GM12878 (cell line): ENCODE measurements at regions of chr4 and their contacts with region 1.

Region 1: GRCh38 chr4:127880764-127881562 is at the start of gene PLK4:
- DNase-seq: peak; percentile 90
- ATAC-seq: peak; percentile 93
- H3K4me3 ChIP-seq: peak within 1 kb of the TSS; percentile 94
- H3K27ac ChIP-seq: peak within 1 kb of the TSS; percentile 93
- H3K4me1 ChIP-seq: no peaks in the 10 kb centered on the region; the same call in 1 of the 2 replicates
- H3K27me3 ChIP-seq: no peaks in the 10 kb centered on the region
- CTCF ChIP-seq: no peak
- EP300 ChIP-seq: 0 out of 4 replicates have a peak, but pooled peaks of 1 of the 2 experiments have one; percentile 44
- POLR2A ChIP-seq: peak; percentile 86
- RAD21 ChIP-seq: no peak
- polyA plus RNA-seq, gene PLK4: 16.6 to 17.5 TPM

Region 2: GRCh38 chr4:127521463-127521862 is 359.5 kb before region 1 on chr4:
- CTCF ChIA-PET with region 1: no interaction called
- POLR2A ChIA-PET with region 1: no interaction called
- RAD21 ChIA-PET with region 1: no interaction called
- SMC1A ChIA-PET with region 1: no interaction called
- in situ Hi-C with region 1: no loop called
- intact Hi-C with region 1: no loop called
- DNase-seq: no peak
- ATAC-seq: no peak
- H3K4me3 ChIP-seq: no peak overlapping the region
- H3K27ac ChIP-seq: no peak overlapping the region
- H3K4me1 ChIP-seq: no peaks in the 10 kb centered on the region
- H3K27me3 ChIP-seq: no peaks in the 10 kb centered on the region
- CTCF ChIP-seq: no peak
- EP300 ChIP-seq: no peak
- POLR2A ChIP-seq: no peak
- RAD21 ChIP-seq: no peak

Region 3: GRCh38 chr4:127604949-127605709 is 275.8 kb before region 1 on chr4:
- CTCF ChIA-PET with region 1: no interaction called
- POLR2A ChIA-PET with region 1: no interaction called
- RAD21 ChIA-PET with region 1: no interaction called
- SMC1A ChIA-PET with region 1: no interaction called
- in situ Hi-C with region 1: no loop called
- intact Hi-C with region 1: loop called (anchors 10 kb)
- DNase-seq: no peak
- ATAC-seq: 0 out of 3 replicates have a peak, but pooled peaks have one; percentile 21
- H3K4me3 ChIP-seq: no peak overlapping the region
- H3K27ac ChIP-seq: no peak overlapping the region
- H3K4me1 ChIP-seq: no peaks in the 10 kb centered on the region
- H3K27me3 ChIP-seq: no peaks in the 10 kb centered on the region; a peak in 2 of 4 replicates
- CTCF ChIP-seq: peak; percentile 9 to 51 (median 25); a peak in 3 of 6 replicates
- EP300 ChIP-seq: no peak
- POLR2A ChIP-seq: no peak
- RAD21 ChIP-seq: peak; percentile 56

Region 4: GRCh38 chr4:127741247-127741646 is 139.7 kb before region 1 on chr4:
- CTCF ChIA-PET with region 1: no interaction called
- POLR2A ChIA-PET with region 1: no interaction called
- RAD21 ChIA-PET with region 1: no interaction called
- SMC1A ChIA-PET with region 1: no interaction called
- in situ Hi-C with region 1: no loop called
- intact Hi-C with region 1: no loop called
- DNase-seq: no peak
- ATAC-seq: no peak
- H3K4me3 ChIP-seq: no peak overlapping the region
- H3K27ac ChIP-seq: no peak overlapping the region
- H3K4me1 ChIP-seq: no peaks in the 10 kb centered on the region
- H3K27me3 ChIP-seq: no peaks in the 10 kb centered on the region
- CTCF ChIP-seq: no peak
- EP300 ChIP-seq: no peak
- POLR2A ChIP-seq: no peak
- RAD21 ChIP-seq: no peak

Region 5: DNA sequence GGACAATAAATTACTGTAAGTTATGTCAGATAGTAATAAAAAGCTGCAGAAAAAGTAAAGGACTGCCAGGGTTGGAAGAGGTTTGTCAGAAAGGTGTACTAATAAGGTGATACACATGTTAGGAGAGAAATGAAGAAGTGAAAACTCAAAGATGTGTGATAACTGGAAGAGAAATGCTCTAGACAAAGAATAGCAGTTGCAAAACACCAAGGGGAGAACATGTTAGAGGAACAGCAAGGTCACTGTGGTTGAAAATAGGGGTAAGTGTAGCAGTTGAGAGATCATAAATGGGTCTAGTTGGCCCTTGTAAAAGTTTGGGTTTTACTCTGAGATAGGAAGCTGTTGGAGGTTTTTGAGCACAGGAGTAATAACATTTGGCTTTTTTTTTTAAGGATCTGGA is 51.9 kb before region 1 on chr4:
- CTCF ChIA-PET with region 1: no interaction called
- POLR2A ChIA-PET with region 1: interaction called, 3 read pairs
- RAD21 ChIA-PET with region 1: interaction called, 4 read pairs
- SMC1A ChIA-PET with region 1: interaction called, 4 read pairs
- in situ Hi-C with region 1: no loop called
- intact Hi-C with region 1: loop called (anchors 5 kb)
- DNase-seq: peak; percentile 65
- ATAC-seq: peak; percentile 92
- H3K4me3 ChIP-seq: no peak overlapping the region
- H3K27ac ChIP-seq: peak overlapping the region; percentile 73
- H3K4me1 ChIP-seq: peaks cover 37% of the 10 kb centered on the region
- H3K27me3 ChIP-seq: no peaks in the 10 kb centered on the region
- CTCF ChIP-seq: no peak
- EP300 ChIP-seq: peak; percentile 59 to 85; a peak in 2 of 4 replicates
- POLR2A ChIP-seq: no peak
- RAD21 ChIP-seq: no peak

Region 6: GRCh38 chr4:127856813-127857447 is 24.0 kb before region 1 on chr4:
- CTCF ChIA-PET with region 1: interaction called, 3 read pairs
- POLR2A ChIA-PET with region 1: interaction called, 10 read pairs
- RAD21 ChIA-PET with region 1: interaction called, 4 read pairs
- SMC1A ChIA-PET with region 1: interaction called, 5 read pairs
- in situ Hi-C with region 1: no loop called
- intact Hi-C with region 1: no loop called
- DNase-seq: peak; percentile 60
- ATAC-seq: peak; percentile 96
- H3K4me3 ChIP-seq: peak overlapping the region; percentile 59
- H3K27ac ChIP-seq: peak overlapping the region; percentile 84
- H3K4me1 ChIP-seq: peaks cover 15% of the 10 kb centered on the region
- H3K27me3 ChIP-seq: no peaks in the 10 kb centered on the region
- CTCF ChIP-seq: no peak
- EP300 ChIP-seq: peak; percentile 71 to 85; a peak in 2 of 4 replicates
- POLR2A ChIP-seq: peak; percentile 71
- RAD21 ChIP-seq: no peak

Region 7: GRCh38 chr4:127965062-127965802 is 84.3 kb after region 1 on chr4 and contains the starts of genes ABHD18 and MFSD8:
- CTCF ChIA-PET with region 1: interaction called, 4 read pairs
- POLR2A ChIA-PET with region 1: interaction called, 11 read pairs
- RAD21 ChIA-PET with region 1: interaction called, 4 read pairs
- SMC1A ChIA-PET with region 1: interaction called, 9 read pairs
- in situ Hi-C with region 1: no loop called
- intact Hi-C with region 1: loop called (anchors 2 kb)
- DNase-seq: peak; percentile 99
- ATAC-seq: peak; percentile 96
- H3K4me3 ChIP-seq: peak within 1 kb of the TSS; percentile 83
- H3K27ac ChIP-seq: peak within 1 kb of the TSS; percentile 89
- H3K4me1 ChIP-seq: peaks cover 5% of the 10 kb centered on the region; the same call in 1 of the 2 replicates
- H3K27me3 ChIP-seq: no peaks in the 10 kb centered on the region
- CTCF ChIP-seq: peak; percentile 38 to 40 (median 39); a peak in 4 of 6 replicates
- EP300 ChIP-seq: 0 out of 4 replicates have a peak, but pooled peaks of 1 of the 2 experiments have one; percentile 9
- POLR2A ChIP-seq: peak; percentile 88
- RAD21 ChIP-seq: 0 out of 2 replicates have a peak, but pooled peaks have one; percentile 15
- polyA plus RNA-seq, gene ABHD18: 3.4 to 3.5 TPM
- polyA plus RNA-seq, gene MFSD8: 18.2 to 29.9 TPM

Region 8: DNA sequence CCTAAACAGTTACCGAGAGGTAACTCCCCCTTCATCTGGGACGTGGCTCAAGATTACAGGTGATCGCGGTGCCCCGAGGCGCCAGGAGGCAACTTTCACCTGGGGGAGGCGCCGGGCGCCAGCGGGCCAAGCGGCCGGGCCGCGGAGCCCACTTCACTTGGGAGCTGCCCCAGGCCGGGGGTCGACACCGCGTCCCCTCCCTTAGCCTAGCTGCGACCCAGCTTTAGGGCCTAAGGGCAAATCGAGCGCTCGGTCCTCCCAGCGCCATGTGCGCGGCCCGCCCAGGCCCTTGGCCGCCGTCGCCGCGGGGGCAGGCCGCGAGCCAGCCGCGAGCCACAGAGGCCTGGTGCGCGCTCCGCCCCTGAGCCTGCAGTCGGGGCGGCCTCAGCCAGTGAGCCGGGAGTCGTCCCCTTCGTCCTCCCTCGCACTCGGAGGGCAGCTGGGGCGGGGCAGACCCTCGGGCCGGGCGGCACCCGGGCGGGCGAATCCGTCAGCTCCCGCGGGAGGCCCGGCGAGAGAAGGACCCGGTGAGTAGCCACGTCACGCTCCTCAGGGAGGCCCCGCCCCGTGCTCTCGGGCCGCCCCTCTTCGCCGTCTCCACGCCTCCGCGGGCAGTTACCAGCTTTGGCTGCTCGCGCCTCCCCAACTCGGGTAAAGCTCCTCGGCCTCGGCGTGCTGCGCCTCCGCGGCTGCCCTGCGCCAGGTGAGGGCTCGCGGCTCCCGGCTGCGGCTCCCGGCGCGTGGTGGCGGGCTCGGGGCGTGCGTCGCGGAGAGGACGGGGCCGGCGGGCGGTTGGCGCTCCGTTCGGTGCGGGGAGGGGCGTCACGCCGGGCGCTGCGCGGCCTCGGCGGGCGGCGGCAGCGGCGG is 180.0 kb after region 1 on chr4 and contains the start of gene LARP1B:
- CTCF ChIA-PET with region 1: no interaction called
- POLR2A ChIA-PET with region 1: no interaction called
- RAD21 ChIA-PET with region 1: interaction called, 6 read pairs
- SMC1A ChIA-PET with region 1: no interaction called
- in situ Hi-C with region 1: no loop called
- intact Hi-C with region 1: loop called (anchors 2 kb)
- DNase-seq: peak; percentile 74
- ATAC-seq: peak; percentile 91
- H3K4me3 ChIP-seq: peak within 1 kb of the TSS; percentile 92
- H3K27ac ChIP-seq: peak within 1 kb of the TSS; percentile 88
- H3K4me1 ChIP-seq: no peaks in the 10 kb centered on the region
- H3K27me3 ChIP-seq: no peaks in the 10 kb centered on the region
- CTCF ChIP-seq: no peak
- EP300 ChIP-seq: no peak
- POLR2A ChIP-seq: peak; percentile 93
- RAD21 ChIP-seq: no peak
- polyA plus RNA-seq, gene LARP1B: 9.3 to 12.7 TPM